ENCODE measurements at regions of chr1 and their contacts with region 1.

Region 1: DNA sequence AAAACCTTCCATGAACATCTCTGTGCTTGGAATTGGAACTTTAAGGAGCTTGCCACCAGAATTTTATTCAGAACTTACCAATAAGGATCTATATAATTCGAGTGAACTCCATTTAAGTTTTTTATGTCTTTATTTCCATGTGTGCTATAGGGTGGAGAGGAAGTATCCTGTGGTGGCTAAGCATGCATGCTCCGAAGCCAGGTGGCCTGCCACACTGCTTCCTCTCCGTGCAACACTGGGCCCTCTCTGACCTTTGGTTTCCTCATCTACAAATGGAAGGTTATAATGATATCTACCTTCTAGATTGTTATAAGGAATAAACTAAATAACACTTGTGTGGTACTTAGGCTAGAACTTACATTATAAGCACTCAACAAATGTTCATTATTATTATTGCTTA is 382.1 kb downstream of the PTPRC start:
- DNase-seq: peak; percentile 64
- H3K4me3 ChIP-seq: no peak overlapping the region
- H3K27ac ChIP-seq: no peak overlapping the region
- H3K4me1 ChIP-seq: peaks cover 17% of the 10 kb centered on the region
- CTCF ChIP-seq: no peak

Region 2: DNA sequence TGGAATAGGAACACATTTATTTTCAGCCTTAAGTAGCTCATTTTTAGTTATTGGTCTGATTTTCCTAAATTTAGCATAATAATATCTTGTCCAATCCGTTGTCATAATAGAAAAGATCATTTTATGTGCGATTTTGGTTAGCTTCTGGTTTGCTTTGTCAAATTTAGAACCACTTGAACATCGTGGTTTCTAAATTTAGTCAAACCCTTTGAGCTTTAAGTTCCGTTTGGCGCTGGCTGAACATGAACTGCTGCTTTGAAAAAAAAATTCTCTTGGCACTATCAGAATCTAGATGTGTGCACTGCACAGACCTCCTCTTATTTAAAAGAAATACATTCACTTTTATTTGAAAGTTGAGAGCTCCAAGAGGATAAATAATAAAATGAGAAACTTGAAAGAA is 11.5 kb before region 1 on chr1:
- CTCF ChIA-PET with region 1: no interaction called
- POLR2A ChIA-PET with region 1: interaction called, 21 read pairs
- intact Hi-C with region 1: no loop called
- DNase-seq: peak; percentile 58
- H3K4me3 ChIP-seq: no peak overlapping the region
- H3K27ac ChIP-seq: peak overlapping the region; percentile 7
- H3K4me1 ChIP-seq: peaks cover 28% of the 10 kb centered on the region
- CTCF ChIP-seq: no peak

Measured in OCI-LY7 (cell line).